ENCODE measurements at regions of chr6 and their contacts with region 1.

Region 1: DNA sequence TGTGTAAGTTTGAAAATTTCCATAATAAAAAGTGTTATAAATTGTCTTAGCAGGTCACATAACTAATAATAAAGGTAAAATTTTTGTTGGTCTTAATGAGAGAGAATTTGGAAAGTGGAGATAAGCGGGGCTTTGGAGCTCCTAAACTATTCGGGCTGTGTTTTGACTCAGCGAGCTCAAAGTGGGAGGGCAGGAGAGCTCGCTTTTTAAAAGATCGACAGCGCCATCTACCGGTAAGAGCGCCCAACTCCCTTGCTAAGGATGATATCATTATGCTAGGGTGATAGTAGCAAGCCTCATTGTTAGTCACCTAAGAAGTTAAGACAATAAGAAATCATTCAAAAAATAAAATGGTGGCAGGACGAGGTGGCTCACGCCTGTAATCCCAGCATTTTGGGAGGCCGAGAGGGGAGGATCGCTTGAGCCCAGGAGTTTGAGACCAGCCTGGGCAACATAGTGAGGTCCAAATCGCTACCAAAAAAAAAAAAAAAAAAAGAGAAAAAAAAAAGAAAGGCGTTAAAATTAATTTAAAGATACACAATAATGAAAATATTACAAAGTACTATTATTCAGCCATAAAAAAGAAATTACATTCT is 24.8 kb downstream of the C6orf15 start:
- DNase-seq: peak; percentile 66 to 89 (median 80)
- ATAC-seq: peak; percentile 100
- H3K4me3 ChIP-seq: no peak overlapping the region
- H3K4me3 Mint-ChIP-seq: no peak overlapping the region
- H3K27ac ChIP-seq: no peak overlapping the region
- H3K27ac Mint-ChIP-seq: peak overlapping the region in 4 of 9 donors; percentile 9 to 73 (median 46)
- H3K4me1 ChIP-seq: no peaks in the 10 kb centered on the region
- H3K4me1 Mint-ChIP-seq: peaks cover 6 to 14% (median 10%) of the 10 kb centered on the region in 7 donors
- H3K27me3 ChIP-seq: no peaks in the 10 kb centered on the region
- H3K27me3 Mint-ChIP-seq: peaks cover 0 to 21% (median 0%) of the 10 kb centered on the region in 5 donors

Region 2: DNA sequence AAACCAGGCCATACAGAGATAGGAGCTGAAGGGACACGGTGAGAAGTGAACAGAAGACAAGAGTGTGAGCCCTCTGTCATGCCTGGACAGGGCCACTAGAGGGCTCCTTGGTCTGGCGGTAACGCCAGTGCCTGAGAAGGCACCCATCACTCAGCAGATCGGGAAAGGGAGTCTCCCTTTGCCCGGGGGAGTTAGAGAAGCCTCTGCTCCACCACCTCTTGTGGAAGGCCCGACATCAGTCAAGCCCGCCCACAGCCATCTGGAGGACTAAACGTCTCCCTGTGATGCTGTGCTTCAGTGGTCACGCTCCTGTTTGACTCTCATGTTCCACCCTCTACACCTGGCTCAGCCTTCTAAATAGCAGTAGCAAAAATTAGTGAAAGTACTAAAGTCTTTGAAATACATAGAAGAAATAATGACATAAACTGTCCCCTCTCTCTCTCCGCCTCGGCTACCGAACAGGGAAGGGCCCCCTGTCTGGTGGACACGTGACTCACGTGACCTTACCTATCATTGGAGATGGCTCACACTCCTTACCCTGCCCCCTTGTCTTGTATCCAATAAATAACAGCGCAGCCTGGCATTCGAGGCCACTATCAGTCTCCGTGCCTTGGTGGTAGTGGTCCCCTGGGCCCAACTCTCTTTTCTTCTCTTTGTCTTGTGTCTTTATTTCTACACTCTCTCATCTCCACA is 675.9 kb before region 1 on chr6:
- CTCF ChIA-PET with region 1: no interaction called
- POLR2A ChIA-PET with region 1: no interaction called
- intact Hi-C with region 1: loop called in 1 of 2 experiments (anchors 2 kb)
- DNase-seq: peak; percentile 26 to 63 (median 52)
- ATAC-seq: peak; percentile 73
- H3K4me3 ChIP-seq: no peak overlapping the region
- H3K4me3 Mint-ChIP-seq: peak overlapping the region; percentile 2 to 69 (median 52)
- H3K27ac ChIP-seq: no peak overlapping the region
- H3K27ac Mint-ChIP-seq: peak overlapping the region in 2 of 9 donors; percentile 53 to 76
- H3K4me1 ChIP-seq: peaks cover 3 to 5% of the 10 kb centered on the region in 2 donors
- H3K4me1 Mint-ChIP-seq: peaks cover 4 to 11% (median 8%) of the 10 kb centered on the region in 7 donors
- H3K27me3 ChIP-seq: peaks cover 0 to 7% of the 10 kb centered on the region in 2 donors
- H3K27me3 Mint-ChIP-seq: peaks cover 45 to 77% (median 66%) of the 10 kb centered on the region in 5 donors

Region 3: DNA sequence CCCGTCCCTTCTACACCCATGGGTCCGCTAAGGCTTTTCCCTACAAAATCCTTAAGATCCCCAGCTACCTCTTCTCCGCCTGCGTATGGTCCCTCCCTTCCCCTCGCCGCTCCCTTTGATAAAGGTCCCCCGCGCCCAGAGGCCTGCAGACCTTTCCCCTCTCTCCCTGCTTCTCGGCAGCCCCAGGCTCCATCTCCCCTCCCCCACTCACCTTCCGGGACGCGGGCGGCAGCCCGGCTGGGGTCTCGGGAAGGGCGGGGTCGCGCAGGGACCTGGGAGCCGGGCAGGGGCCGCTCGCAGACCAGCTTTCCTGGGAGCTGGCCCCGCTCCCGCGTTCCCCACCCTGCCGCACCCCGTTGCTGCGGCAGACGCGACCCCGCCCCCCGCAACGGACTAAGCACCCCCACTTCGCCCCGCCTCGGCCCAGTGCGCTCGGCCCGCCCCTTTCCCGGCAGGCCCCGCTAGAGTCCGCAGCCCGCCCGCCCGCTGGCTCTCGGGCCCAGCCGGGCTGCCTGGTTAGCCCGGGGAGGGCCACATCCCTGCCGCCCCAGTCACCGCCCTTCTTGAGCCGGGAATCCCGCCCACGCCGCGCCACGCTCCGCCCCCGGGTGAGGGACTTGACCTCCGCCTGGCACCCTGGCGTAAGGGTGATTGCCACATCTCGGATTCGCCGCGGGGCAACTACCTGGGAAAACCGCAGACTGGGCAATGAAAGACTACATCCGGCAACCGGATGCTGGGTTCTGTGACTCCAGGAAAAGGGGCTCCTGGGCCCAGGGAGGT is 345.1 kb before region 1 on chr6 and contains the start of gene FLOT1:
- CTCF ChIA-PET with region 1: interaction called, 5 read pairs
- POLR2A ChIA-PET with region 1: no interaction called
- intact Hi-C with region 1: loop called (anchors 5 to 10 kb)
- DNase-seq: peak in 7 of 9 donors; percentile 47 to 98 (median 56)
- ATAC-seq: peak; percentile 84
- H3K4me3 ChIP-seq: peak within 1 kb of the TSS; percentile 85
- H3K4me3 Mint-ChIP-seq: peak within 1 kb of the TSS; percentile 84 to 100 (median 93)
- H3K27ac ChIP-seq: peak within 1 kb of the TSS; percentile 83
- H3K27ac Mint-ChIP-seq: peak within 1 kb of the TSS; percentile 84 to 98 (median 93)
- H3K4me1 ChIP-seq: peaks cover 28 to 35% of the 10 kb centered on the region in 2 donors
- H3K4me1 Mint-ChIP-seq: peaks cover 48 to 74% (median 61%) of the 10 kb centered on the region in 7 donors
- H3K27me3 ChIP-seq: no peaks in the 10 kb centered on the region
- H3K27me3 Mint-ChIP-seq: no peaks in the 10 kb centered on the region
- total RNA-seq, gene FLOT1: 59.4 to 204 (median 81.3) TPM

Region 4: DNA sequence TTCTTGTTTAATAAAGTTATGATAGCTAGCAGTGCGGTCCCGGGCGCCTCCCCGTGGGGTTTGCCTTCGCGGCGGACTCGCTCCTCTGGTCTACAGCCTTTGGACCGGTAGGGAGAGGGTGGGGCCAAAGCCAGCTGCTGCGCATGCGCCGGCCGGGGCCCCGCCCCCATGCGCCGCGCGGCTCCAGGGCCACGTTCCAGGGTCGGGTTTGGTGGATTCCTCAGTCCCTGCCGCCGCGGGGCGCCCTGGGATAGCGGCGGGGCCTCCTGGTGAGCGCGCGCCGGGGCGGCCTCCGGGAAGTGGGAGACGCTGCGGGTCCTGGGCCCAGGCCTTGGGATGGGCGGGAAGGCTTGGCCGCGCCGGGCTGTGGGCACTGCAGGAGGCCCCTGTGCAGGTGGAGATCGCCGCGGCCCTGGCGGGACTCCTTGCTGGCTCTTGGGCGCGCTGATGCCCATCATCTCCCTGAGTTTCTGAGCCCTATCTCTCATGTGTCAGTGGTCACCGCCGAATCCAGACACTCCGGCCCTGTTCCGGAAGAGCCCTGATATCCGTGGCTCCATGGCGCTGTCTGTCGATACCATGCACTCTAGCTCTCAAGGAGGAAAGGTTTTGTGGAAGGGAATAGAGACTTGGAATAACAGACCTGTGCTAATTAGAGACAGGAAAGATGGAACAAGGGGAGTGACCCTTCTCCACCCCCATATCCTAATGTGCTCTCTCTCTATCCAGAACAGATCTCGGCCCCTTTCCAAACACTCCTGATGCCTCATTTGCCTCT is 173.3 kb before region 1 on chr6 and contains the start of gene VARS2:
- CTCF ChIA-PET with region 1: interaction called, 20 read pairs
- POLR2A ChIA-PET with region 1: interaction called, 5 read pairs
- intact Hi-C with region 1: loop called (anchors 1 kb)
- DNase-seq: peak; percentile 80 to 95 (median 86)
- ATAC-seq: peak; percentile 98
- H3K4me3 ChIP-seq: peak within 1 kb of the TSS; percentile 64
- H3K4me3 Mint-ChIP-seq: peak within 1 kb of the TSS; percentile 87 to 96 (median 92)
- H3K27ac ChIP-seq: peak within 1 kb of the TSS; percentile 78
- H3K27ac Mint-ChIP-seq: peak within 1 kb of the TSS; percentile 81 to 93 (median 88)
- H3K4me1 ChIP-seq: peaks cover 13 to 17% of the 10 kb centered on the region in 2 donors
- H3K4me1 Mint-ChIP-seq: peaks cover 20 to 51% (median 40%) of the 10 kb centered on the region in 7 donors
- H3K27me3 ChIP-seq: no peaks in the 10 kb centered on the region
- H3K27me3 Mint-ChIP-seq: no peaks in the 10 kb centered on the region
- total RNA-seq, gene VARS2: 22.2 to 47.3 (median 37.9) TPM

Region 5: DNA sequence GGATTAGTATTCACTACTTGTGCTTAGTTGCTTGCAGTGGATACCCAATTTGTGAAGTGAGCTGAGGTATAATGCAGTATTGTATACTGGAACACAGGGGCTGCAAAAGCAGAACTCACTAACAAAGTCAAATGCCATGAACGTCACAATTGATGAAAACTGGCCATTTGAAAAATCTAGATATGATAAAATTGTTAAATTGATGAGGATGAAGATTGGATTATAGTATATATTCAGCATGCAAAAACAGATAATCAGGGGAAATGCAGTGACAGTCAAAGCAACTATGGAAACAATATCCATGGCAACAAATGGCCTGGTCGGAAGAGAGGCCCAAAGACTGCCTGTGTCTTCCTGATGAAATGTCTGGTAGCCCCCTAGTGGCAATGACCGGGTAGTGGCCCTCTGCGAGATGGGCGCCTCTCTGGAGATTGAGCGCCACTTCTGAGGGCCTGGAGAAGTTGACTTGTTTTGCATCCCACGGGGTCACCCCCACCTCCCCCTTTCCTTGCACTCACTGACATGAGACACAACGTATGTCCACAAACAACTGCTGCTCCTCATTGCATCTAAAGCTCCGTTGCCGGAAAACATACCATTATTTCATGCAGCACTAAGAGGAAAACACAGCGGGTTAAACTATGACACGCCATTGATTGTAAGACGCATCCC is 18.8 kb before region 1 on chr6:
- CTCF ChIA-PET with region 1: interaction called, 10 read pairs
- POLR2A ChIA-PET with region 1: interaction called, 6 read pairs
- intact Hi-C with region 1: no loop called
- DNase-seq: peak; percentile 45 to 73 (median 61)
- ATAC-seq: peak; percentile 96
- H3K4me3 ChIP-seq: no peak overlapping the region
- H3K4me3 Mint-ChIP-seq: no peak overlapping the region
- H3K27ac ChIP-seq: no peak overlapping the region
- H3K27ac Mint-ChIP-seq: peak overlapping the region in 1 of 9 donors; percentile 20
- H3K4me1 ChIP-seq: no peaks in the 10 kb centered on the region
- H3K4me1 Mint-ChIP-seq: peaks cover 0 to 7% (median 0%) of the 10 kb centered on the region in 7 donors
- H3K27me3 ChIP-seq: no peaks in the 10 kb centered on the region
- H3K27me3 Mint-ChIP-seq: peaks cover 0 to 2% (median 0%) of the 10 kb centered on the region in 5 donors

Region 6: DNA sequence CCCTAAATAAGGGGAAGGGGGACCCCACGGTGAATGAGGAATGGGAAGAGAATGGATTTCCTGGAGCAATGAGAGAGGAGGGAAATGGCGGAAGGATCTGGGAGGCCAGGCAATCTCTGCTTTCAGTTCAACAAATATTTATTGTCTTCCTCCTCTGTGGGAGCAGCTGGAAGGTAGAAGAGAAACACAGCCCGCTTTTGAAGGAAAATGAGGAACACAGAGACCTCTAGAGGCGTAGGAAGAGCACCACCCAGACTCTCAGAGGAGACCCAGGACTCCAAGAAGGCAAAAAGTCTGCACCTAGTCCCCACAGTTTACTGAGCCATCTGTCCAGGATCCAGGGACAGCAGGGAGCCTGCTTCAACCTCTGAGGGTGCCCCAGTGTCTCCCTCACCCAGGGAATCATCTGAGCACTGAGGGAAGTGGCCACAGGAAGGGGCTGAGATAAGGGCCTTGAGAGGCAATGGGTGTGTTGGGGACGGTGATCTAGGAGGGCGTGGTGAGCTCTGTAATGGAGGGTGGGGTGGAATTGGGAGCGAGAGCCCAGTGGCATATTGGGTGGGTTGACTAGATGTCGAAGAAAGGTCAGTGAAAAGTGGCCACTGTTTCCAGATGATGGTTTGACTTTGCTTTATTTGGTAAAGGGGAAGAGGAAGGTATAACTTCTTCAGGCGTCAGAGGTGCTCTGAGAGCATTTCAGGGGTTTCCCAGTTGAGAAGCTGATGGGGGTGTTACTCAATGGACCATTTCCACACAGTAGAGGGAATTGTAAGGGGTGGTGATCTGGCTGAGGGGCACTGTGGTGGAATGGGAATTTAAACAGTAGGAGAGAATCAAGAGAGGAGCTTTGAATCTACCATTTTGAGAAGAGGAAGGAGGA is 27.6 kb after region 1 on chr6:
- CTCF ChIA-PET with region 1: interaction called, 27 read pairs
- POLR2A ChIA-PET with region 1: interaction called, 4 read pairs
- intact Hi-C with region 1: loop called in 1 of 2 experiments (anchors 1 kb)
- DNase-seq: peak in 3 of 9 donors; percentile 23 to 45 (median 23)
- ATAC-seq: no peak
- H3K4me3 ChIP-seq: no peak overlapping the region
- H3K4me3 Mint-ChIP-seq: peak overlapping the region in 2 of 10 donors; percentile 28 to 46
- H3K27ac ChIP-seq: no peak overlapping the region
- H3K27ac Mint-ChIP-seq: peak overlapping the region in 2 of 9 donors; percentile 32 to 76
- H3K4me1 ChIP-seq: no peaks in the 10 kb centered on the region
- H3K4me1 Mint-ChIP-seq: peaks cover 0 to 12% (median 5%) of the 10 kb centered on the region in 7 donors
- H3K27me3 ChIP-seq: no peaks in the 10 kb centered on the region
- H3K27me3 Mint-ChIP-seq: peaks cover 0 to 24% (median 9%) of the 10 kb centered on the region in 5 donors

Measured in naive thymus-derived CD4-positive, alpha-beta T cell (primary cell).